ENCODE measurements at regions of chr6 and their contacts with region 1.

Region 1: GRCh38 chr6:113858480-113859348 is 1.6 kb downstream of the MARCKS start:
- DNase-seq: peak; percentile 79
- H3K4me3 ChIP-seq: peak overlapping the region; percentile 99
- H3K27ac ChIP-seq: peak overlapping the region; percentile 98
- H3K27me3 ChIP-seq: no peaks in the 10 kb centered on the region
- CTCF ChIP-seq: peak; percentile 70

Region 2: GRCh38 chr6:113433335-113433991 is 425.3 kb before region 1 on chr6:
- CTCF ChIA-PET with region 1: interaction called, 11 read pairs
- POLR2A ChIA-PET with region 1: interaction called, 8 read pairs
- DNase-seq: peak; percentile 61
- H3K4me3 ChIP-seq: no peak overlapping the region
- H3K27ac ChIP-seq: no peak overlapping the region
- H3K27me3 ChIP-seq: no peaks in the 10 kb centered on the region
- CTCF ChIP-seq: no peak

Region 3: DNA sequence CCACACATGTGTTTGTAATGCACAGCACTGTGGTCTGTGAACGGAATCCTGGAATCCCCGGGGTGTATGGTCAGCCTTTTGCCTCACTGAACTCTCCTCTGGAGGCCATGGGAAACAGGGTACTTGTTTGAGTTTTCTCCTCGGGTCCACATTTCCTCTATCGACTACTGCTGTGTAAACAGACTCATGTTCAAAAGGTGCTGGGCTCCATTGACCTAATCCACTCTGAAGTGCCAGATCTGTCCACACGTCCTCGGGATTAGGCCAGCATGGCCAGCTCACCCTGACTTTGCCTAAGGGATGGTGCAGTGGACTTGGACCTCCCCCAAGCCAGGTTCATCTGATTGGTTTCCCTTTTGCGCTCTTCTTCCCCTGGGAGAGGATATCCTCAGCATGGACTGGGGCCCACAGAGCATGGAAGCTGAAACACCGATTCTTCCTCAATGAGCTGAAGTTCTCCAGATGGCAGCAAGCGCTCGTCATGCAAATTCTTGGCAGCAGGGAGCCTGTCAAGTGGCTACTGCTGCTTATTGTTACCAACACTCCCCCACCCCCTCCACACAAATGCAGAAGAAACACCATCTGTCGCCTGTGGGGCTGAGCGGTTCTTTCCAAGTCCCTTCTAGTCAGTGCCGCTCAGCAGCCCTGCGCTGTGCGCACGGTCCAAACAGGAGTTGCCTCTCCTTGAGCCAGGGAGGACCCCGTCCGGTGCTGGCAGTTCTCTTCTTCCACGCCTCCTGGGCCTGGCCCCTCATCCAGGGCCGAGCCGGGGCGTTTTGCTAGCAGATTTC is 294.1 kb before region 1 on chr6:
- CTCF ChIA-PET with region 1: interaction called, 4 read pairs
- POLR2A ChIA-PET with region 1: interaction called, 12 read pairs
- DNase-seq: peak; percentile 79
- H3K4me3 ChIP-seq: peak overlapping the region; percentile 27
- H3K27ac ChIP-seq: peak overlapping the region; percentile 90
- H3K27me3 ChIP-seq: no peaks in the 10 kb centered on the region
- CTCF ChIP-seq: no peak

Region 4: DNA sequence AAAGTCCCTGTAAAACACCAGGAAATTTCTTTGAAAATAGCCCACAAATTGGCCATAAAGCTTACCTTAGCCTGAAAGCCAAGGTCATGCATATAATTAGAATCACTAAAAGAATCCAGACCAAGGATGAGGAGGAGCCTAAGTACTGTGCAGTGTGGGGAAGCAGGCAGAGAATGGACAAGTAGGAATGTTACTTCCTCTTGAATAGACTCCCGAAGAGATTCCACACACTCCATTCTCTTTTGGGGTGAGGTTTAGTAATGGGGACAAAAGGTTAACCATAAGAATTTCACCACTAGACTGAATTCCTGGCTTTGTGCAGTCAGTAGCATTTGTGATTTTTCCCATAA is 29.0 kb before region 1 on chr6:
- CTCF ChIA-PET with region 1: no interaction called
- POLR2A ChIA-PET with region 1: no interaction called
- DNase-seq: no peak
- H3K4me3 ChIP-seq: no peak overlapping the region
- H3K27ac ChIP-seq: no peak overlapping the region
- H3K27me3 ChIP-seq: no peaks in the 10 kb centered on the region
- CTCF ChIP-seq: no peak

Region 5: DNA sequence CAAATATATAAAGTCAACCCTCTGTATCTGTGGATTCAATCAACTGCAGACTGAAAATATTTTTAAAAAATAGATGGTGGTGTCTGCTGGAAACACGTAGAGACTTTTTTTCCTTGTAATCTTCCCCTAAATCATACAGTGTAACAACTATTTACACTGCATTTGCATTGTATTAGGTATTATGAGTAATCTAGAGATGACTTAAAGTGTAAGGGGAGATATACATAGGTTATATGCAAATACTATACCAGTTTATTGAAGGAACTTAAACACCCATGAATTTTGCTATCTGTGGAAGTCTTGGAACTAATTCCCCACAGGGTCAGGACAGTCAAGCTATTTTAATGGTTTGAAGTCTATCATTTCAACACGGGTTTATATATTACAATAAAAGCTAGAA is 102.1 kb after region 1 on chr6:
- CTCF ChIA-PET with region 1: no interaction called
- POLR2A ChIA-PET with region 1: no interaction called
- DNase-seq: no peak
- H3K4me3 ChIP-seq: no peak overlapping the region
- H3K27ac ChIP-seq: no peak overlapping the region
- H3K27me3 ChIP-seq: no peaks in the 10 kb centered on the region
- CTCF ChIP-seq: no peak

Region 6: GRCh38 chr6:114157848-114158247 is 299.1 kb after region 1 on chr6:
- CTCF ChIA-PET with region 1: no interaction called
- POLR2A ChIA-PET with region 1: no interaction called
- DNase-seq: no peak
- H3K4me3 ChIP-seq: no peak overlapping the region
- H3K27ac ChIP-seq: no peak overlapping the region
- H3K27me3 ChIP-seq: no peaks in the 10 kb centered on the region
- CTCF ChIP-seq: no peak